Heart left ventricle (tissue), 16 donors: ENCODE measurements at regions of chr12 and their contacts with region 1.

Region 1: DNA sequence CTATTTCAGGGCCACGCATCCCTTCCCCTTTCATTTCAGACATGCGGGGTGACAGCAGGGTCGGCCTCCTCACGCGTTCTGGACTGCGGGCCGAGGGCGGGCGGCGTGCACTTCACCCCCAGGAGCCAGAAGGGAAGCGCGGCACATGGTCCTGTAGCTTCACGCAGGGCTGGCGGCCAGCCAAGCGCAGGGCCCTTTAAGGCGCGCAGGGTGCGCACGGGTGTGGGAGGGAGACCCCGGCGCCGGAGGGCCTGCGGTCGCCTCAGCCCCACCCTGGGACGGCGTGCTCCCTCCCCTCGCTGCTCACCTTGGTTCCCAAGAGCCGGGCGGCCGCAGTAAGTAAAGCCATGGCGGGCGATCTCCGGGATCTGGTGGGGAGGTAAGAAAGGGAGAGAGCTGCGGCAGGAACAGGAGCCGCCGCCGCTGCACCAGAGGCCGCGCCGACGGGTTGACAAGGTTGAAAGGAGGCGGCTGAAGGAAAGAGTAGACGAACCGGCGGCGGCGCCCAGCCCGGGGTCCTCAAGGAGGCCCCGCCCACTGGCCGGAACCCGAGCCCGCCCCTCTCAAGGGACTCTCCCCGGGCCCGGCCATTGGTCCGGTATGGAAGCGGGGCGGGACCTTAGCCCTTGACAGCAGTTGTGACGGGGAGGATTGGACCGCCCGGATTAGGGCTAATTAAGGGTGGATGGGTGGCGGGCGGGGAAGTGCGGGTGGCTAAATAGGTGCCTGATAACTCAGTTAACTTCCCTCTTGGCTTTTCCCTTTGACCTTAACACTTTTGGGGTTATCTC is at the start of gene CS:
- DNase-seq: peak; percentile 99 to 100 (median 99)
- ATAC-seq: peak; percentile 97 to 99 (median 98)
- H3K4me3 ChIP-seq: peak within 1 kb of the TSS; percentile 62 to 98 (median 84)
- H3K27ac ChIP-seq: peak within 1 kb of the TSS; percentile 89 to 100 (median 96)
- H3K4me1 ChIP-seq: peaks cover 24 to 63% (median 53%) of the 10 kb centered on the region in 12 donors
- H3K27me3 ChIP-seq: no peaks in the 10 kb centered on the region
- CTCF ChIP-seq: no peak
- POLR2A ChIP-seq: peak; percentile 21 to 90
- total RNA-seq, gene CS: 489 to 866 (median 662) TPM

Region 2: GRCh38 chr12:56224102-56224701 is 75.8 kb before region 1 on chr12 and contains the start of gene NABP2:
- intact Hi-C with region 1: loop called in 1 of 10 experiments (anchors 2 kb)
- DNase-seq: peak; percentile 98 to 99 (median 99)
- ATAC-seq: peak; percentile 80 to 90 (median 85)
- H3K4me3 ChIP-seq: peak within 1 kb of the TSS; percentile 52 to 97 (median 66)
- H3K27ac ChIP-seq: peak within 1 kb of the TSS; percentile 19 to 98 (median 92)
- H3K4me1 ChIP-seq: peaks cover 8 to 46% (median 37%) of the 10 kb centered on the region in 12 donors
- H3K27me3 ChIP-seq: no peaks in the 10 kb centered on the region
- CTCF ChIP-seq: peak; percentile 66 to 98 (median 91)
- POLR2A ChIP-seq: peak in 1 of 2 donors; percentile 55
- total RNA-seq, gene NABP2: 18.0 to 27.4 (median 20.7) TPM

Region 3: DNA sequence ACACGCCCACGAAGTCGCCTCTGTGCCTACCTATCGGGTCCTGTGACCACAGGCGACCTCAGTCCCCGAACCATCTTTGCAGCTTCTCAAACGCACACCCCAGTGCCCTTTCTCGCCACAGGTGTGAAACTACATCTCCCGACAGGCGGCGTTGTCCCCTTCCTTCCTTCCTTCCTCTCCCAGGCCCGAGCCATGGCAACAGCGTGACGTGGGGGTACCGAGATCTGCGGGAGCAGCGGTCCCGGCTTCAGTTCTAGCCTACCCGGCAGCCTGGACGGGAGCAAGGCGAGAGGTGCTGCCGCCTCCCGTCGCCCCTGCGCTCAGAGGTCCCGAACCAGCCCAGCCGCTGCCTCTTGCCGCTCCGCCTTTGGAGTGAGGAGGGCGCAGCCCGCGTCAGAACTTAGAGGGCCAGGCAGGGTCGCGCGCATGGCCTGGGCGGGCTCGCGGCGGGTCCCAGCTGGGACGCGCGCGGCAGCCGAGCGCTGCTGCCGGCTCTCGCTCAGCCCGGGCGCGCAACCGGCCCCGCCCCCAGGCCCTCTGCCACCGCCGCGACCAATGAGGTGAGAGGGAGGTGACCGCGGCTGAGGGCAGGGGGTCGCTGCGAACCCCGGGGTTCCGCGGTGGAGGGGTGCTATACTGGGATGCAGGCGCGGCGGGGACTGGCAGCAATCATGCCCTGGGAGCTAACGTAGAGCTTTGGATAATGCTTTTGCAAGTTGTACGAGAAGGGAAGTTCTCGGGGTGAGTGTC is 33.2 kb before region 1 on chr12 and contains the start of gene COQ10A:
- intact Hi-C with region 1: loop called in 2 of 10 experiments (anchors 2 kb)
- DNase-seq: peak; percentile 91 to 95 (median 92)
- ATAC-seq: peak; percentile 62 to 94 (median 90)
- H3K4me3 ChIP-seq: peak within 1 kb of the TSS; percentile 56 to 91 (median 70)
- H3K27ac ChIP-seq: peak within 1 kb of the TSS; percentile 90 to 99 (median 96)
- H3K4me1 ChIP-seq: peaks cover 0 to 48% (median 16%) of the 10 kb centered on the region in 12 donors
- H3K27me3 ChIP-seq: no peaks in the 10 kb centered on the region
- CTCF ChIP-seq: peak; percentile 51 to 87 (median 65)
- POLR2A ChIP-seq: peak; percentile 36 to 96
- total RNA-seq, gene COQ10A: 45.7 to 250 (median 129) TPM